ENCODE measurements at regions of chr1 and their contacts with region 1.

Region 1: GRCh38 chr1:51768971-51769588 is 109.4 kb downstream of the NRDC start:
- DNase-seq: peak; percentile 24
- H3K4me3 Mint-ChIP-seq: no peak overlapping the region
- H3K27ac Mint-ChIP-seq: no peak overlapping the region
- H3K4me1 Mint-ChIP-seq: no peaks in the 10 kb centered on the region
- H3K27me3 Mint-ChIP-seq: no peaks in the 10 kb centered on the region

Region 2: DNA sequence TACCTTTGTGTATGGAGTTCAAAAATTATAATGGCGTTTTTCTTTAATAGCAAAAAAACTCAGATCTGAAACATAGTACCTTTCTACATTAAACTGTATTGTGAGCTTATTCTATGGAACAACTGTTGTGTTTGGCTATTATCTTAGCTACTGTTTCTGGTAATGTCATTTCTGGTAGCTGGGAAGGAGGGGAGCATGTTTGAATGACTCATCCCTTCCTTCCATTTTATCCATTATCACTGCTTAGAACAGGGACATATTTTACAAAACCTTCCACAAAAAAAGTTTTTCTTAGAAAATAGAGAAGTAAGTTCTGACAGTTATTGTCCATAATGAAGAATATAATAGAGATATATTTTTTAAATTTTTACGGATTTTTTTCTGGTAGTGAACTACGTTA is 18.9 kb before region 1 on chr1:
- CTCF ChIA-PET with region 1: interaction called, 21 read pairs
- POLR2A ChIA-PET with region 1: interaction called, 3 read pairs
- DNase-seq: no peak
- H3K4me3 Mint-ChIP-seq: no peak overlapping the region
- H3K27ac Mint-ChIP-seq: no peak overlapping the region
- H3K4me1 Mint-ChIP-seq: peaks cover 4% of the 10 kb centered on the region
- H3K27me3 Mint-ChIP-seq: no peaks in the 10 kb centered on the region

Measured in activated CD4-positive, alpha-beta memory T cell treated with anti-CD3 and anti-CD28 coated beads, Interleukin-2, amount 10 ng/mL, durations not matched to agents 7 days and 5 days (primary cell).